Transverse colon (tissue), 4 donors: ENCODE measurements at regions of chr1 and their contacts with region 1.

Region 1: DNA sequence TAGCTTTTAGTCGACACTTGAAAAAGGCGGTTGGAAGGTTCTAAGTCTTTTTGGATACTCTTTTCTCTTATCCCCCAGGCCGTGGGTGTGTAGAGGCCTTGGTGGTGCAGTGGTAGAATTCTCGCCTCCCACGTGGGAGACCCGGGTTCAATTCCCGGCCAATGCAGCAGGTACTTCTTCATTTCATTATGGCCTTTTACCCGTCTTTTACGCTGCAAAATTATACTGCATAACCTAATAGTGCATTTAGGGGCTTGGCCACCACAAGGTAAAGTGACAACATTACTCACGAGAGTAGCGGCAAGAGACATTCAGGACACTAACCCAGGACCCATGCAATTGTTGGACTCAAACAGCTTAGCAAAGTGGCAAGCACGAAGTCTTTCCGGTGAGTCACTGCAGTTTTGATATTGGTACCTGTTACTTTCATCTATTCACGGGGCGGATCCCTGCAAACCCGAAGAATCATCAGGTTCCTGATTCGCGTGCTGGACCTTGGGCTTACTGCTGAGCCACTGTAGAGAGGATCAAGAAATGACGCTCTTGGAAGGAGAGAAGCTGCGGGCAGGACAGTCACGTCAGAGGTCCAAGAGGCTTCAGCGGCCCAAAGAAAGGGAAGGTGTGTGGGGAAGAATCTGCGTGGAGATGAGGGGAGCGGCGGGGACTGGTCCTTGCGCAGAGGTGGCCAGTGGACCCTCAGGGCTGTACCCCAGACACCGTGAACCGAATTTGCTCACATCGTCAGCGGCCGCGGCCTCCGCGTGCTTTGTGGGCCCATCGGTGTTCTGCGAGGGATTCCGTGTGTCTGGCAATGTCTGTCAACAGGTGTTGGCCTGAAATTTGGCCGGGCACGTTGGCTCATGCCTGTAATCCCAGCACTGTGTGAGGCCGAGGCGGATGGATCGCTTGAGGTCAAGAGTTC is 12.9 kb upstream of the RNU1-4 start:
- DNase-seq: peak; percentile 14
- H3K4me3 ChIP-seq: no peak overlapping the region
- H3K27ac ChIP-seq: no peak overlapping the region
- H3K4me1 ChIP-seq: no peaks in the 10 kb centered on the region
- H3K27me3 ChIP-seq: peaks cover 25% of the 10 kb centered on the region
- CTCF ChIP-seq: no peak
- EP300 ChIP-seq: no peak
- POLR2A ChIP-seq: no peak

Region 2: GRCh38 chr1:16631248-16632043 is 96.0 kb before region 1 on chr1:
- in situ Hi-C with region 1: loop called in 1 of 4 experiments (anchors 10 kb)
- intact Hi-C with region 1: no loop called
- DNase-seq: peak; percentile 29
- H3K4me3 ChIP-seq: no peak overlapping the region
- H3K27ac ChIP-seq: no peak overlapping the region
- H3K4me1 ChIP-seq: no peaks in the 10 kb centered on the region
- H3K27me3 ChIP-seq: no peaks in the 10 kb centered on the region
- CTCF ChIP-seq: no peak
- EP300 ChIP-seq: no peak
- POLR2A ChIP-seq: no peak

Region 3: DNA sequence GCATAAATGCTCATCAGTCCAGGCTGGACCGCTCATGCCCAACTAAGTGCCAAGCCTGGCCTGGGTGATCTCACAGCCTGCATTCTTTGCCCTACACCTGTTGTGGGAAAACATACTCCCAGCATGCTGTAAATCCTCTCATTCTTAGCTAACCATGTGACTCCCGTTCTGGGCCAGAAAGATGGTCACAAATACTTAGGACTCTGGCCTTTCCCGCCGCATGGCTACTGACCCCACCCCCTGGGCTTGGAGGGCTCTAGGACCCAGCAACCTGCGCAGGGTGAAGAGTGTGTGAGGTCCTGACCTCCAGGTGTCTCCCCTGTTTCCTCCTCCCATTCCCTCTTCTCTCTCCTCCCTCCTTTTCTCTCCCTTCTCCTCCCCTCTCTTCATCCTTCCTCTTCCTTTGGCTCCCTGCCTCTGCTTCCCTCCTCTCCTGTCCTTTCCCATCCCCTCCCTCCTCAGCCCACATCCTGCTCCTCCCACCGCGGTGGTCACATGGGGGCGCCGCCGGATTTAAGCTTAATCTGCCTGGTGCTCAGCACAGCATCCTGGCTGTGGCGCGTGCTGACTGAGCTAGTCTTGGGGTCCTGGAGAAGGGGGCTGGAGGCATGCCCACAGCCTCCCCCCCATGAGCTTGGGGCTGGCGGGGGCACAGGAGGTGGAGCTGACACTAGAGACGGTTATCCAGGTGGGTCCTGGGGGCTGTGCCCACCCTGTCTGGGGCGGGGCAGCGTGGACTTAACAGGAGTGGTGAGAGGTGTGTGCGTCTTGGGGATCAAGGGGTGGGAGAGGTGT is 194.1 kb after region 1 on chr1 and contains the start of gene CROCC:
- in situ Hi-C with region 1: loop called in 1 of 4 experiments (anchors 10 kb)
- intact Hi-C with region 1: no loop called
- DNase-seq: no peak
- H3K4me3 ChIP-seq: no peak within 1 kb of the TSS
- H3K27ac ChIP-seq: no peak within 1 kb of the TSS
- H3K4me1 ChIP-seq: peaks cover 0 to 7% (median 0%) of the 10 kb centered on the region in 4 donors
- H3K27me3 ChIP-seq: no peaks in the 10 kb centered on the region
- CTCF ChIP-seq: no peak
- EP300 ChIP-seq: no peak
- POLR2A ChIP-seq: no peak
- total RNA-seq, gene CROCC: 13.0 to 149 (median 23.7) TPM